Prostate gland (tissue), 2 donors: ENCODE measurements at regions of chr5 and their contacts with region 1.

Region 1: DNA sequence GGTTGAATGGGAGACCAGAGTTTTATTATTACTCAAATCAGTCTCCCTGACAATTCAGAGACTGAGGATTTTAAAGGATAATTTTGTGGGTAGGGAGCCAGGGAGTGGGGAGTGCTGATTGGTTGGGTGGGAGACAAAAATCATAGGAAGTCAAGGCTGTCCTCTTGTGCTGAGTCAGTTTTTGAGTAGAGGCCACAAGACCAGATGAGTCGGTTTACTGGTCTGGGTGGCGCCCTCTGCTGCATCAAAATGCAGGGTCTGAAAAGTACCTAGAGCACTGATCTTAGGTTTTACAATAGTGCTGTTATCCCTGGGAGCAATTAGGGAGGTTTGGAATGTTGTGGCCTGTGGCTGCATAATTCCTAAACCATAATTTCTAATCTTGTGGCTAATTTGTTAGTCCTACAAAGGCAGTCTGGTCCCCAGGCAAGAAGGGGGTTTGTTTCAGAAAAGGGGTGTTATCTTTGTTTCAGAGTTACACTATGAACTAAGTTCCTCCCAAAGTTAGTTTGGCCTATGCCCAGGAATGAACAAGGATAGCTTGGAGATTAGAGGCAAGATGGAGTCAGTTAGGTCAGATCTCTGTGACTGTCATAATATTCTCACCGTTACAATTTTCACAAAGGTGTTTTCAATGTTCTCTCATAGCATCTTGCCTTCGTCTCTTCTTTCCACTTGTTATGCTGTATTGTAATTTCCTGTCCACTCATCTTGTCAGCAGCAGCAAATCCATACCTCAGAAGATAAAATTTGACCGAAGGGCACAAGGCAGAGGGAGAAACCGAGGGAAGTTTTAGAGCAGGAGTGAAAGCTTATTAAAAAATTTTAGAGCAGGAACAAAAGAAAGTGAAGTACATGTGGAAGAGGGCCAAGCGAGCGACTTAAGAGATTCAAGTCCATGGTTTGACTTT is 59.2 kb upstream of the CLINT1 start:
- DNase-seq: peak; percentile 17
- H3K4me3 ChIP-seq: no peak overlapping the region
- H3K27ac ChIP-seq: peak overlapping the region in 1 of 2 donors; percentile 30
- H3K4me1 ChIP-seq: no peaks in the 10 kb centered on the region
- H3K27me3 ChIP-seq: no peaks in the 10 kb centered on the region
- CTCF ChIP-seq: peak in 2 of 4 experiments; percentile 14 to 50
- POLR2A ChIP-seq: no peak

Region 2: GRCh38 chr5:157290981-157291711 is 627.0 kb before region 1 on chr5:
- intact Hi-C with region 1: no loop called
- DNase-seq: no peak
- H3K4me3 ChIP-seq: no peak overlapping the region
- H3K27ac ChIP-seq: no peak overlapping the region
- H3K4me1 ChIP-seq: no peaks in the 10 kb centered on the region
- H3K27me3 ChIP-seq: no peaks in the 10 kb centered on the region
- CTCF ChIP-seq: no peak
- POLR2A ChIP-seq: no peak

Region 3: DNA sequence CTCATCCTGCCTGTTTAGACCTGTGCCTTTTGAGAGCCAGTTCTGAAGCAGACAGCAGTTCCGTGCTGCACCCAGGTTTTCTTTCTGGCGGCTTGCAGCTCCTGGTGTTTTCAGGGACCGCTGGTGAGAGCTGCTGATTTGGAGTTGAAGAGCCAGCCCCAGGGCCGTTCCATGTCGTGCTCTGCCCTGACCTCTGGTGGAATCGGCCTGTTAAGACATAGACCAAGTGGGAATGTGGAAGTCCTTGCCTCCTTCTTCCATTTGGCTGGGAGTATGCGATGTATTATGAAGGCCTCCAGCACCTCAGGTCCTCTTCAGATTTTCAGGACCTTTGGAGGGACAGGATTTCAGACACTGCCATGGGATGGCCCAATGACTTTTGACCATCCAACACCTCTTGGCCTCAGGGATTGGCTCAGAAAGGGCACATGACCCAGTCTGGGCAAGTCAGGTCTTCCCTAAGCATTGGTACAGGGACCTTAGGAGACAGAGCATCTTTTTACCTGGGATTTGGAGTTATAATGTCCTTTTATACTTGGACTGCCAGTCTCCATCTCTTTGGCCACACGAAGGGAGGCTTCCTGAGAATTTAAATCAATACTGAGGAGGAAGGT is 76.9 kb after region 1 on chr5:
- intact Hi-C with region 1: loop called (anchors 10 kb)
- DNase-seq: peak; percentile 49
- H3K4me3 ChIP-seq: no peak overlapping the region
- H3K27ac ChIP-seq: no peak overlapping the region
- H3K4me1 ChIP-seq: no peaks in the 10 kb centered on the region
- H3K27me3 ChIP-seq: no peaks in the 10 kb centered on the region
- CTCF ChIP-seq: peak; percentile 19 to 72 (median 54)
- POLR2A ChIP-seq: no peak